Ovary (tissue), 10 donors: ENCODE measurements at regions of chr6 and their contacts with region 1.

Region 1: DNA sequence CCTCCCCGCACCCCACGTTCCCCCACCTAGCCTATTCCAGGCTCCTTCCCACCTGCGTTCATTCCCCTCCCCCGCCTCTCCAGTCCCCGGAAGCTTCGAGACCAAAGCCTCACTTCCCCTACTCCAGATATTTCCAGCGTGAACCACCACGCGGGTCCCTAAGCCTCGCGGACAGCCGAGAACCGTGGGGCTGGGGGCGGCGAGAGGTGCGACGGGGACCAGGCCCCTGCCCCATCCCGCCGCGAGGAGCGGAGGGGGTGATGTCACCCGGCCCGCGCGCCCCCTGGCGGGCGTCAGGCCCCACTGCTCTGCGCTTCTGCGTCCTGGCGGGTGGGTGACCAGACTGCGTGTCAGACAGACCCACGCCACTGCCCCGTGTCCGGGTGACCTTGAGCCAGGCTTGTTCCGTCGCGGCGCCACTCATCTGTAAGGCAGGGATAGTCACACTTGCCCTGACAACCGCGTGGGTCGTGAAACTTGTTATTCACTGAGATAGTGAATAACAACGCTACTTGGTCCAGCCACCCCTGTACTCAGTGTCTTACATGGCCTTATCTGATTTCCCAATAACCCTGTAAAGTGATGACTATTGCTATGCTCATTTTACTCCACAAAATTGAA is 9.0 kb upstream of the HSP90AB1 start:
- DNase-seq: peak; percentile 77 to 89 (median 85)
- H3K4me3 ChIP-seq: peak overlapping the region; percentile 53
- H3K27ac ChIP-seq: peak overlapping the region; percentile 40 to 89
- H3K4me1 ChIP-seq: peaks cover 10% of the 10 kb centered on the region
- H3K27me3 ChIP-seq: no peaks in the 10 kb centered on the region
- CTCF ChIP-seq: peak; percentile 86 to 99 (median 98)
- EP300 ChIP-seq: no peak
- POLR2A ChIP-seq: peak; percentile 63

Region 2: DNA sequence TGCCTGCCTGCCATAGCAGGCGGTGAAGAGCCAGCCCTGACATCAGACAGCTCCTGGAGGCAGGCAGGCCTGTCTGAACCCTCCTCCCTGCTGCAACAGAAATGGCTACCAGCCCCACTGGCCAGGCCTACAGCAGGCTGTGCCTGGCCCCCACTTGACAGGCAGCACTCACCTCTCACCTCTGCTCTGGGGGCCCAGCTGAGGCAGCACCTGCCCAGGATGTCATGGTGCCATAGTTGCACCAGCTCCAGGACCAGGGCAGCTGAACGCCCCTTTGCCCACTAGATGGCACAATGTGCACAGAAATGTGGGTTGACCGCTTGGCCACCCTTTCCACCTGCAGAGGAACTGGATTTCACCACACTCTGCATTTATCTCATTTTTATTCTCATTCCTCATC is 141.3 kb before region 1 on chr6:
- intact Hi-C with region 1: loop called in 1 of 4 experiments (anchors 5 kb)
- DNase-seq: peak; percentile 69 to 81 (median 77)
- H3K4me3 ChIP-seq: no peak overlapping the region
- H3K27ac ChIP-seq: no peak overlapping the region
- H3K4me1 ChIP-seq: peaks cover 2% of the 10 kb centered on the region
- H3K27me3 ChIP-seq: no peaks in the 10 kb centered on the region
- CTCF ChIP-seq: peak; percentile 60 to 69 (median 65)
- EP300 ChIP-seq: no peak
- POLR2A ChIP-seq: no peak

Region 3: GRCh38 chr6:44172731-44173500 is 65.0 kb before region 1 on chr6:
- intact Hi-C with region 1: loop called (anchors 5 kb)
- DNase-seq: peak; percentile 68 to 87 (median 86)
- H3K4me3 ChIP-seq: no peak overlapping the region
- H3K27ac ChIP-seq: no peak overlapping the region
- H3K4me1 ChIP-seq: peaks cover under 1% of the 10 kb centered on the region
- H3K27me3 ChIP-seq: no peaks in the 10 kb centered on the region
- CTCF ChIP-seq: peak; percentile 69 to 87 (median 72)
- EP300 ChIP-seq: no peak
- POLR2A ChIP-seq: no peak

Region 4: GRCh38 chr6:44223319-44224028 is 14.4 kb before region 1 on chr6 and contains the start of gene SLC29A1:
- intact Hi-C with region 1: loop called in 1 of 4 experiments (anchors 2 kb)
- DNase-seq: peak; percentile 70 to 79 (median 77)
- H3K4me3 ChIP-seq: peak within 1 kb of the TSS; percentile 53
- H3K27ac ChIP-seq: peak within 1 kb of the TSS; percentile 67 to 72
- H3K4me1 ChIP-seq: peaks cover 37% of the 10 kb centered on the region
- H3K27me3 ChIP-seq: no peaks in the 10 kb centered on the region
- CTCF ChIP-seq: no peak
- EP300 ChIP-seq: no peak
- POLR2A ChIP-seq: peak; percentile 9
- total RNA-seq, gene SLC29A1: 11.2 to 35.4 (median 30.2) TPM